Mammary epithelial cell (primary cell): ENCODE measurements at regions of chr14 and their contacts with region 1.

Region 1: GRCh38 chr14:64234877-64235651 is 59.1 kb downstream of the ESR2 start:
- DNase-seq: peak; percentile 65
- H3K4me3 ChIP-seq: no peak overlapping the region
- H3K27ac ChIP-seq: no peak overlapping the region
- H3K4me1 ChIP-seq: peaks cover 17% of the 10 kb centered on the region
- H3K27me3 ChIP-seq: no peaks in the 10 kb centered on the region
- CTCF ChIP-seq: no peak

Region 2: GRCh38 chr14:64209444-64210131 is 25.5 kb before region 1 on chr14:
- CTCF ChIA-PET with region 1: no interaction called
- dilution Hi-C with region 1: no loop called
- in situ Hi-C with region 1: no loop called
- intact Hi-C with region 1: no loop called
- DNase-seq: no peak
- H3K4me3 ChIP-seq: no peak overlapping the region
- H3K27ac ChIP-seq: no peak overlapping the region
- H3K4me1 ChIP-seq: no peaks in the 10 kb centered on the region
- H3K27me3 ChIP-seq: no peaks in the 10 kb centered on the region
- CTCF ChIP-seq: no peak

Region 3: GRCh38 chr14:64289571-64289970 is 54.5 kb after region 1 on chr14:
- CTCF ChIA-PET with region 1: no interaction called
- dilution Hi-C with region 1: loop called (anchors 5 kb)
- in situ Hi-C with region 1: no loop called
- intact Hi-C with region 1: loop called (anchors 5 kb)
- DNase-seq: no peak
- H3K4me3 ChIP-seq: no peak overlapping the region
- H3K27ac ChIP-seq: no peak overlapping the region
- H3K4me1 ChIP-seq: peaks cover 9% of the 10 kb centered on the region
- H3K27me3 ChIP-seq: no peaks in the 10 kb centered on the region
- CTCF ChIP-seq: no peak